Activated naive CD4-positive, alpha-beta T cell treated with anti-CD3 and anti-CD28 coated beads for 36 hours (primary cell): ENCODE measurements at regions of chr22 and their contacts with region 1.

Region 1: DNA sequence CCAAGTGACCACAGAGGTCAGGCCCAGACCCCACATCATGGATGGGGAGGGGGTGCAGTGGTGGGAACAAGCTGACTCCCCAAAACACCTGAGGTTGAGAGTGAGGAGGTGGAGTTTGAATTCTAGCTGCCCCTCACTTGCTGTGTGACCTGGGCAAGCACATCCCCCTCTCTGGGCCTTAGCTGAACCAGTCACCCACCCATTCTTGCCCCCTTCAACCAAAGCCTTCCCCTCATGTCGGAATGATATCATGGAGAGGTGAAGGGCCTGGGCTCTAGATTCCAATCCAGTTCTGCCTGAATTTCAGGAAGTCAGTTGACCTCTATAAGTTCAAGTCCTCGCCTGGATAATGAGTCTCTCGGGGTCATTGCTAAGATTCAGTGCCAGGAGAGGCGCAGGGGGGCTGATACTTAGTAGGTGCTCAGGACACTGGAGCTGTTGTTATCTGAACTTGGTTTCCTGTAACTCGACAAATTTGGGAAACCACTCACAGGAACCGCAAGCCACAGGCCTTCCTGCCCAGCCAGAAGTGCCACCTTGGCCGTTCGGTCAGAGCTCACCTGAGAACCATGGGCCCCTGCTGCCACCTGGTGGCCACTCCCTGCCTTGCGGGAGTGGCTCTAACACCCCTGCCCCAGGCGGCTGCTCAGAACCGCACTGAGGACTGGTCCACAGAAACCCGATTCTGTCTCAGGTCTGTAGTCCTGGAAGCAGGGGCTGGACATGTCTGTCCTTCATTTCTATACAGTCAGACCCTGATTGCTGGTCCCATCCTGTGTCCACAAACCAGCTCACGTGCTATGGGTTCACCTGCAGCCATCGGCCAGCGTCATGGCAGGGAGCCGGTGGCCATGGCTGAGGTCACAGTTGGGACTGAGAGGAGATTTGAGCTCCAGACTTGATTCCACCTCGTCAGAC is 6.9 kb downstream of the CDC42EP1 start:
- DNase-seq: peak; percentile 97
- H3K4me3 Mint-ChIP-seq: peak overlapping the region; percentile 36
- H3K27ac Mint-ChIP-seq: peak overlapping the region; percentile 68
- H3K4me1 Mint-ChIP-seq: peaks cover 22% of the 10 kb centered on the region
- H3K27me3 Mint-ChIP-seq: peaks cover 11% of the 10 kb centered on the region

Region 2: GRCh38 chr22:37260901-37261336 is 306.2 kb before region 1 on chr22:
- CTCF ChIA-PET with region 1: interaction called, 11 read pairs
- intact Hi-C with region 1: no loop called
- DNase-seq: peak; percentile 75
- H3K4me3 Mint-ChIP-seq: no peak overlapping the region
- H3K27ac Mint-ChIP-seq: no peak overlapping the region
- H3K4me1 Mint-ChIP-seq: peaks cover 34% of the 10 kb centered on the region
- H3K27me3 Mint-ChIP-seq: no peaks in the 10 kb centered on the region

Region 3: DNA sequence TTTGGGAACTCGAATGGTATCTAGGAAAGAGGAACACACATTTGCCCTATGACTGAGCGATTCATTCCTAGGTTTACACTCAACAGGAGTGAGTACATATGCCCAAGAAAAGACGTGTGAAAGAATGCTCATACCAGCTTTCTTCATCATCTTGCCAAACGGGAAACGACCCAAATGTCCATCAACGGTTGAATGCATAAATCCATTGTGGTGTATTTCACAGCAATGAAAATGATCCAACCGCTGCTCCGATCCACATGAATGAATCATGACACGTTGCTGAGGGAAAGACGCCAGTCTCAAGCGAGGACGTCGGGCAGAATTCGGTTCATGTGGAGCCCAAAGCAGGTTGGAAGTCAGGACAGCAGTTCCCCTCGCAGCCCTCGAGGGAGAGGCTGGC is 213.3 kb before region 1 on chr22:
- CTCF ChIA-PET with region 1: no interaction called
- intact Hi-C with region 1: no loop called
- DNase-seq: no peak
- H3K4me3 Mint-ChIP-seq: no peak overlapping the region
- H3K27ac Mint-ChIP-seq: no peak overlapping the region
- H3K4me1 Mint-ChIP-seq: no peaks in the 10 kb centered on the region
- H3K27me3 Mint-ChIP-seq: no peaks in the 10 kb centered on the region

Region 4: GRCh38 chr22:37472418-37473006 is 94.7 kb before region 1 on chr22:
- CTCF ChIA-PET with region 1: interaction called, 19 read pairs
- intact Hi-C with region 1: no loop called
- DNase-seq: peak; percentile 53
- H3K4me3 Mint-ChIP-seq: no peak overlapping the region
- H3K27ac Mint-ChIP-seq: no peak overlapping the region
- H3K4me1 Mint-ChIP-seq: no peaks in the 10 kb centered on the region
- H3K27me3 Mint-ChIP-seq: no peaks in the 10 kb centered on the region

Region 5: DNA sequence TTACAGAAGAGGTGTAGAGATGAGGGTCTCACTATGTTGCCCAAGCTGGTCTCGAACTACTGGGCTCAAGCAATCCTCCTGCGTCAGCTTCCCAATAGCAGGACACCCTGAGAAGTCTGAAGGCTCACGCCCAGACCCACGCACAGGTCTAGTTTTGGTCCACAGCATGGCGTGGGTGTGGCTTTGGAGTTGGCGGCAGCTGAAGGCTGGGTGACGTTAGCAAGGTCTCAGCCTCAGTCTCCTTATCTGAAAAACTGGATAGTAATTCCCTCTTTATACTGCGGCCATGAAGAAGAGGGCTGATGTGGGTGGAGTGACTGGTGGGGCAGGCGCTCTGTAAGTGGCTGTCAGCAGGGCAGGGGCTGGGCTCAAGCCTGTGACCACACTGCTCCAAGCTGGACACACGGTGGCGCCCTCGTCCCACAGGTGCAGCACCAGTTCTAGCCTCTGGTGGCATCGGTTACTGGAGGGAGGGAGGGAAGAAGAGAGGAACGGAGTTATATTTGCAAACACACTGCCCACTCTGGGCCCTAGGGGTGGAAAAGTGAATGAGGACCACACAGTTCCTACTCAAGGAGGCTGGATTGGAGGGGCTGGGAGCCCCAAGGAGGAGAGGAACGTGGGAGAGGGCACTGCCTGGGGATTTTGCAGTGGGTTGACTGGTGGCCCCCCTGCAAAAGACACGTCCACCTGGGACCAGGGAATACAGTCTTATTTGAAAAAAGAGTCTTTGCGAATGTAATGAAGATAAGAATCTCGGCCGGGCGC is 28.4 kb before region 1 on chr22:
- CTCF ChIA-PET with region 1: interaction called, 496 read pairs
- intact Hi-C with region 1: loop called (anchors 1 kb)
- DNase-seq: peak; percentile 97
- H3K4me3 Mint-ChIP-seq: no peak overlapping the region
- H3K27ac Mint-ChIP-seq: no peak overlapping the region
- H3K4me1 Mint-ChIP-seq: peaks cover 34% of the 10 kb centered on the region
- H3K27me3 Mint-ChIP-seq: peaks cover 11% of the 10 kb centered on the region

Region 6: GRCh38 chr22:37581504-37581903 is 14.3 kb after region 1 on chr22:
- CTCF ChIA-PET with region 1: interaction called, 23 read pairs
- intact Hi-C with region 1: no loop called
- DNase-seq: no peak
- H3K4me3 Mint-ChIP-seq: no peak overlapping the region
- H3K27ac Mint-ChIP-seq: no peak overlapping the region
- H3K4me1 Mint-ChIP-seq: peaks cover 14% of the 10 kb centered on the region
- H3K27me3 Mint-ChIP-seq: no peaks in the 10 kb centered on the region

Region 7: GRCh38 chr22:37745548-37746365 is 178.6 kb after region 1 on chr22:
- CTCF ChIA-PET with region 1: no interaction called
- intact Hi-C with region 1: no loop called
- DNase-seq: peak; percentile 91
- H3K4me3 Mint-ChIP-seq: peak overlapping the region; percentile 78
- H3K27ac Mint-ChIP-seq: peak overlapping the region; percentile 77
- H3K4me1 Mint-ChIP-seq: peaks cover 14% of the 10 kb centered on the region
- H3K27me3 Mint-ChIP-seq: no peaks in the 10 kb centered on the region